ENCODE measurements at regions of chr17 and their contacts with region 1.

Region 1: GRCh38 chr17:64129764-64130558 is at the start of gene ERN1:
- H3K4me3 Mint-ChIP-seq: peak within 1 kb of the TSS; percentile 82
- H3K27ac Mint-ChIP-seq: peak within 1 kb of the TSS; percentile 100
- H3K4me1 Mint-ChIP-seq: peaks cover 50% of the 10 kb centered on the region
- H3K27me3 Mint-ChIP-seq: no peaks in the 10 kb centered on the region

Region 2: DNA sequence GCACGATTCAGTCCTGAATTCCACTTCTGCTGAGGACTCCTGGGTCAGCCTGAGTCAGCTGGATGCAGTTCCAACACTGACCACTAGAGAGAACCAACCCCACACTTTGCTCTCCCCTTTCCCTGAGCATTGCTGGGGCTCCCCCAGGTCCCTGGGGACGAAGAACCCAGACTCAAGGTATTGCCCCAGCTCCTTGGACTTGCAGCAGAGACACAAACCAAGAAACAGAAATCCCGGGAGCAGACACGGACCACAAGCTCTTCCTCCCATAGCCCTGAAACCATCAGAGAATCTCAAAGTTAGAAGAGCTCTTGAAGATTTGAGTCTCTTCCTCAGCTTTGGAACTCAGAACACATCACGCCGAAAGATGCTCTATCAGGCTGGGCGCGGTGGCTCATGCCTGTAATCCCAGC is 210.6 kb before region 1 on chr17:
- intact Hi-C with region 1: loop called (anchors 5 kb)
- H3K4me3 Mint-ChIP-seq: no peak overlapping the region
- H3K27ac Mint-ChIP-seq: no peak overlapping the region
- H3K4me1 Mint-ChIP-seq: peaks cover 35% of the 10 kb centered on the region
- H3K27me3 Mint-ChIP-seq: peaks cover 18% of the 10 kb centered on the region

Region 3: DNA sequence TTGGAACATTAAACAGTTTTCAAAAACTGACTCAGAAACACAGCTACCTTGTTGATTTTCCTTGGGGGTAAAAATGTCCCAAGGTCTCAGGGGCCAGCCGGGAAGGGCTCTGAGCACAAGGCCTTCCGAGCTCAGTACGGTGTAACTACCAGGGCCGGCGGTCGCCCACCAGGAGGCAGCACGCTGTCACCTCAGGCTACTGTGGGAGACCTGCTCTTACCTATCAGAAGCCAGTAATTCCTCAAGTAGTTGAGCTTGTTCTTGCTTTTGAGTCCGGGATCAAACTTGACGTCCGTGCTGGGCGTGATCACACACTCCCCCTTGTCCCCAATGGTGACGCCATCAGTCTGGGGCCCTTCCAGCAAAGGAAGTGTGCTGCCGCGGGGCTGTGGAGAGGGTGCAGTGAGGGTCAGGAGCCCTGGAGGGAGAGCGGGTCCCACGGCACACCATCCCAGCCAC is 66.2 kb before region 1 on chr17:
- intact Hi-C with region 1: loop called (anchors 2 kb)
- H3K4me3 Mint-ChIP-seq: no peak overlapping the region
- H3K27ac Mint-ChIP-seq: peak overlapping the region; percentile 64
- H3K4me1 Mint-ChIP-seq: peaks cover 80% of the 10 kb centered on the region
- H3K27me3 Mint-ChIP-seq: no peaks in the 10 kb centered on the region

Region 4: GRCh38 chr17:64091116-64091515 is 38.8 kb before region 1 on chr17:
- intact Hi-C with region 1: loop called (anchors 5 kb)
- H3K4me3 Mint-ChIP-seq: no peak overlapping the region
- H3K27ac Mint-ChIP-seq: peak overlapping the region; percentile 60
- H3K4me1 Mint-ChIP-seq: peaks cover 49% of the 10 kb centered on the region
- H3K27me3 Mint-ChIP-seq: no peaks in the 10 kb centered on the region

Region 5: DNA sequence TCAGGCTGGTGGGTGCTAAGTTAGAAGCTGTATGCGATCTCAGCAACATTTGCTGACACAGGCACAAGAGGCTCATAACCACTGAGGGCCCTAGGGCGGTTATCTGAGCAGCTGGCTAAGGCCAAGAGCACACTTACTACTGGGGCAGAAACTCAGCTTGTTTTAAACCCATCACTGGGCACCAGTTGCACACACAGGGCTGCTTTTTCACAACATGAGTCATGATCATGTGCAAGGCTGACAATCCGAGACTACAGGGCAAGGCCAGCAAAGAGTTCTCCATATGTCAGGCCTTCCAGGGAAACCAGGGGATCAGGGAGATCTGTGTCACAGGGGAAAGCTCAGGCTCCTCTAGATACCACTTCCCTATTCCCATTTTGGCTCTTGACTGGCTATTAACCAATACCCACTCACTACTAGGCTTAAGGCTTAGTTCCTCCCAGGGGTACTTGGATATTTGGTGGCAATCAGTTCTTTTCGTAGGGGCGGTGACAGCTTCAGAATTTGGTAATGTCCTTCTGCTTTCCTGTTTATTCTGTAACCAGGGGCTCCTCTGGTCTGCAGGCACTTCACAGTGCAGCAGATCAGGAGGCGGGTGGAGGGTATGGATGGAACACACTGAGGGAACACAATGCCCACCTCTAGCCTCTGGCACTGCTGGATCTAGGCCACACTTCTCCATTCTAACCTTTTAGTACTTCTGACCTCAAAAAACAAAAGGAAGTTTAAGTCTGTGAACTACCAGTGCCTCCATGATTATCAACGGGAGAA is 44.9 kb after region 1 on chr17:
- intact Hi-C with region 1: no loop called
- H3K4me3 Mint-ChIP-seq: peak overlapping the region; percentile 44
- H3K27ac Mint-ChIP-seq: peak overlapping the region; percentile 97
- H3K4me1 Mint-ChIP-seq: peaks cover 72% of the 10 kb centered on the region
- H3K27me3 Mint-ChIP-seq: no peaks in the 10 kb centered on the region

Region 6: GRCh38 chr17:64281962-64282727 is 152.2 kb after region 1 on chr17:
- intact Hi-C with region 1: loop called (anchors 5 kb)
- H3K4me3 Mint-ChIP-seq: no peak overlapping the region
- H3K27ac Mint-ChIP-seq: no peak overlapping the region
- H3K4me1 Mint-ChIP-seq: peaks cover 34% of the 10 kb centered on the region
- H3K27me3 Mint-ChIP-seq: no peaks in the 10 kb centered on the region

Region 7: GRCh38 chr17:64357191-64357981 is 227.4 kb after region 1 on chr17:
- intact Hi-C with region 1: no loop called
- H3K4me3 Mint-ChIP-seq: no peak overlapping the region
- H3K27ac Mint-ChIP-seq: peak overlapping the region; percentile 14
- H3K4me1 Mint-ChIP-seq: peaks cover 27% of the 10 kb centered on the region
- H3K27me3 Mint-ChIP-seq: no peaks in the 10 kb centered on the region